Psoas muscle (tissue), 8 donors: ENCODE measurements at regions of chr14 and their contacts with region 1.

Region 1: GRCh38 chr14:63727774-63728728 is at the start of gene SGPP1:
- DNase-seq: peak; percentile 84 to 89
- ATAC-seq: peak; percentile 92 to 94 (median 92)
- H3K4me3 ChIP-seq: peak within 1 kb of the TSS; percentile 99
- H3K27ac ChIP-seq: peak within 1 kb of the TSS; percentile 91
- H3K4me1 ChIP-seq: peaks cover 18% of the 10 kb centered on the region
- H3K27me3 ChIP-seq: no peaks in the 10 kb centered on the region
- CTCF ChIP-seq: peak; percentile 40
- total RNA-seq, gene SGPP1: 4.7 to 7.6 (median 4.9) TPM

Region 2: GRCh38 chr14:63641473-63642228 is 86.4 kb before region 1 on chr14 and contains the start of gene WDR89:
- intact Hi-C with region 1: loop called in 1 of 2 experiments (anchors 5 kb)
- DNase-seq: peak; percentile 96 to 98
- ATAC-seq: peak; percentile 94 to 97 (median 96)
- H3K4me3 ChIP-seq: peak within 1 kb of the TSS; percentile 72
- H3K27ac ChIP-seq: peak within 1 kb of the TSS; percentile 95
- H3K4me1 ChIP-seq: no peaks in the 10 kb centered on the region
- H3K27me3 ChIP-seq: no peaks in the 10 kb centered on the region
- CTCF ChIP-seq: peak; percentile 88
- total RNA-seq, gene WDR89: 8.6 to 11.4 (median 10.0) TPM